Head of caudate nucleus (tissue), 42 donors: ENCODE measurements at regions of chr9 and their contacts with region 1.

Region 1: DNA sequence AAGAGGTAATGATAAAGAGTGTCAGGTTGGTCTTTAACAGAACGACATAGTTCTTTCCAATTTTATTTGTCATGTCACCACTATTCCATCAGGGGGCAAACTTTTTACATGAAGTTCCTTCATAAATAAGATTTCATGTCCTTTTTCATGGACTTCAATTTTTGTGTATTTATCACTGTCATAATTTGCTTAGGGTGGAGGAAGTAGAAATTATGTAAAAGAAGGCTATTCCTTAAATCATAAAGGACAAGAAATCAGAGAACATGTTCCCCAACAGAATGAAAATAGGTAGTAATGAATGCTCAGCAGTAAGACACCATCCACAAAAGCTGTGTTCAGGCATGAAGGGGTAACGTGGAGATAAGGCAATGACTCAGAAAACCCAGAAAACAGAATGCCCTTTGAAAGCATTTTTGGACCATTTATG is 72.7 kb downstream of the ZFAND5 start:
- DNase-seq: peak in 5 of 42 donors; percentile 13 to 48 (median 21)

Region 2: DNA sequence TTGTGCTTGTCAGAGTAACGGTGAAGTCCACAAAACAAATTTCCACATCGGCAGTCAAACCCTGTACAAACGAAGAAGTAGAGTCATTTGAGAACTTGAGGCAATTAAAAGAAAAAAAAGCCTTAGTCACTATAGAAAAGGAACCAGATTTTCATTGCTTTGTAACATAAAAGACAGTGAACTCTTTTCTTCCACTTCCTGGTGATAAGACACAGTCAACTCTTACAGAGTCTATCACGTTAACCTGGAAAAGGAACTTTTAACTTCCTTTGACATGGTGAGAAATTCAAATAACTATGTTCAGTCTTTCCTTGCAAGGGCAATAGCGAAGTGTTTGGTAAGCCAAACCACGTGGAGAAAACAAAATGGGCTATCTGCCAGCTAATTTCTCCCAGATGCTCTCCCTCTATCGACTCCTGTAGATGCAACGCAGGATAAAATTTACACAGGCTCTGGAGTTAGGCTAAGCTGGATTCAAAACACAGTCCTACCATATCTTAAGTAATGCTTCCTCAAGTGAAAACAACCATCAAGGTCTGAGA is 63.8 kb after region 1 on chr9:
- intact Hi-C with region 1: loop called (anchors 5 kb)
- DNase-seq: peak in 8 of 42 donors; percentile 11 to 65 (median 25)

Region 3: DNA sequence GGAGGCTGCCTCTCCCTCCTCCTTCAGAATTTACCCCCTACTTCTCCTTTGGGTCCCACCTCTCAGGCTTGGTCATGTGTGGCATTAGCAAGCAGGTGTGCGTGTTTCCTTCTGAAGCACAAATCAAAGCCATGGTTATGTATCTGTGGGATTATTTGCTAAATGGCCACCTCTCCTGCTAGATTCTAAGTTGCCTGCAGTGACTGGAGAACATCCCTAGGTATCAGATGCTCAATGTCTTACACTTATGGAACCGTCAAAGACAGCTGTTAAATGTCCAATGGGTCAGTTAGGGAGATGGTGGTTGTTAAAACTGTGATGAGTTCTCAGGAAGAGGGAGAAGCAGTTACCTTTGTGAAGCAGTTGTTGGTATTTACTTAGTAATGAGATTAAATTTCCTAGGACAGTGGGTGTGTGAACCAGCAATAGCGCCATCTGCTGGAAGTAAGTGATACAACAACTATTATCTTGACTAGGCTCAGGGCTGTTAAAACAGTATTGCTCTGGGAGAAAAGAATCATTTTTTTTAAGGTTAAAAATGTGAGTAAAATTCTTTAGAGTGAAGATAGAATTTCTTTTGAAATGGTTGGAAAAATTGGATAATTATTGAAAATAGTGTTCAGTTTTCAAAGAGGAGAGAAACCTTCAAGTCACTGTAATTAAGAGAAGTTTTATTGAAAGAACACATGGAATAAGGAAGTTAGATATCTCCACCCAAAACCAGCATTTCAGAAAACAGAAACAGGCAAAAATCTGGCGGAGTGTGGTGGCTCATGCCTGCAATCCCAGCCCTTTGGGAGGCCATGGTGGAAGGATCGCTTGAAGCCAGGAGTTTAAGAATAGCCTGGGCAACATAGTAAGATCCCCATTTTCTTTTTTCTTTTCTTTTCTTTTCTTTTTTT is 300.5 kb after region 1 on chr9:
- intact Hi-C with region 1: loop called (anchors 5 kb)
- DNase-seq: peak in 23 of 42 donors; percentile 14 to 79 (median 47)